ENCODE measurements at regions of chr4 and their contacts with region 1.

Region 1: DNA sequence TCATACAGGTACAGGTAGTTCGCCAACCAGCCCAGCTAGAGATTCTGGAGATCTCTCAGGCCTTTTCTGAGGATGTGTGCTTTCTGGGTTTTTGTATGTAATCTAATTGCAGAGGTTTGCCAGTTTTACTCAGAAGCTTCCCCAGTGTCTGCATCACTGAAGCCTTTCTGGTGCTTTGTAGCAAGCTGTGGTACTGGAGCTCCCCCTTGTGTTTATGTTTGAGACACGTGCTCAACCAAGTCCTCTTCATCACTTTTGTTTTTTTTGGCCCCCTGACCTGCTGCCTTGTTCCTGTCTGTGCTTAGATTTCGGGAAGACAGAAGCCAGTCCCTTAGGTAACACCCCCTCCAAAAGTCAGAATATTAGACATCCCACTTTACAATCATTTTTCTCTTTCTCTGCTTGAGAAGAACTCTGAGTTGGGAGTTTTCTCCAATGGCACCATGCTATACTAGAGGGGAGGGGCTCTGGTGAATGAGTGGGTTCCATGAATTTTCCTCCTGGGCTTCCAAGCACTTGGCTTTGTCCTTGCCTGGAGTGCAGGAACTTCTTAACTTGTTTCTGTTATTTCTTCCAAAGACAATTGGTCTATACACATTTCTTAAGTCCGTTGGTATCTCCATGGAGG is 128.4 kb upstream of the TBC1D9 start:
- DNase-seq: peak; percentile 65
- H3K4me3 ChIP-seq: no peak overlapping the region
- H3K27ac ChIP-seq: no peak overlapping the region
- H3K27me3 ChIP-seq: no peaks in the 10 kb centered on the region
- CTCF ChIP-seq: peak; percentile 81

Region 2: GRCh38 chr4:140790765-140791164 is 93.8 kb before region 1 on chr4:
- in situ Hi-C with region 1: no loop called
- DNase-seq: no peak
- H3K4me3 ChIP-seq: no peak overlapping the region
- H3K27ac ChIP-seq: no peak overlapping the region
- H3K27me3 ChIP-seq: no peaks in the 10 kb centered on the region
- CTCF ChIP-seq: no peak

Region 3: DNA sequence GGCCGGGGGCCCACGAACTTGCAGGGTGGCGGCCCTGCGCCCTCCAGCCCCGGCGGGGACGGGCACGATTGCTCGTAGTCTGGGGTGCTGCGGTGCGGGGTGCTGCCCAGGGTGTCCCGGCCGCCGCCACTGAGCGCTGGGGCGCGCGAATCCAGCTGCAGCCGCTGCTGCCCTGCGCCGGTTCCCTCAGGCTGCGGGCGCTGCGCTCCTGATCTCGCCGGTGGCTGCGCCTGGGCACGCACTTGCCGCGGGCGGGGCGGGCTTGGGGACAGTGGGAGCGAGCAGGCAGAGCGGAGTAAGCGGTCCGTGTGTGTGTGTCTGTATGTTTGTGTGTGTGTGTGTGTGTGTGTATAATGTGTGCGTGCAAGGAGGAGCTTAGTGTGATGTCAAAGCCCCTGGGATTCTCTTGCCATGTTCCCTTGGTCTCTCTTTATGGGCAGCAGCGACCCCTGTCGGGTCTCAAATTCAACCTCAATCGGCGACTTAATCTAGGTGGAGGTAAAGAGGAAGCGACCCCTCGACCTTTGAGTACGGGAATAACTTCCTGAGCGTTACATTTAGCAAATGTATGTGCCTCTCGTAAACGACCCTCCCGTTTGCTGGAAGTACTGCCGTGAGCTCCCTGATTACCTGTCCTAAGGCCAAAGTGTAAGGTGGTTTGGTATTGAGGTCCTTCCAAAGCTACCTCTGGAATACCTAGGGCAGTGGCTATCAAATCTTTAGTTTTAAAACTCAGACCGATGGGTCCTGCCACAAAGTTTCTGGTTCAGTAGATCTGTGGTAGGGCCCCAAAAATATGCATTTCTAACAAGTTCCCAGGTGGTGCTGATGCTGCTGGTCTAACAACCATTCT is 248.8 kb after region 1 on chr4 and contains the start of gene RNF150:
- in situ Hi-C with region 1: loop called (anchors 25 kb)
- DNase-seq: peak; percentile 83
- H3K4me3 ChIP-seq: peak within 1 kb of the TSS; percentile 77
- H3K27ac ChIP-seq: no peak within 1 kb of the TSS
- H3K27me3 ChIP-seq: peaks cover 2% of the 10 kb centered on the region
- CTCF ChIP-seq: peak; percentile 85